ENCODE measurements at regions of chr1 and their contacts with region 1.

Region 1: GRCh38 chr1:211680752-211681327 is 5.4 kb upstream of the NEK2 start:
- DNase-seq: peak; percentile 92
- H3K4me3 Mint-ChIP-seq: no peak overlapping the region
- H3K27ac Mint-ChIP-seq: peak overlapping the region; percentile 24
- H3K4me1 Mint-ChIP-seq: peaks cover 8% of the 10 kb centered on the region
- H3K27me3 Mint-ChIP-seq: no peaks in the 10 kb centered on the region
- CTCF ChIP-seq: peak; percentile 99

Region 2: DNA sequence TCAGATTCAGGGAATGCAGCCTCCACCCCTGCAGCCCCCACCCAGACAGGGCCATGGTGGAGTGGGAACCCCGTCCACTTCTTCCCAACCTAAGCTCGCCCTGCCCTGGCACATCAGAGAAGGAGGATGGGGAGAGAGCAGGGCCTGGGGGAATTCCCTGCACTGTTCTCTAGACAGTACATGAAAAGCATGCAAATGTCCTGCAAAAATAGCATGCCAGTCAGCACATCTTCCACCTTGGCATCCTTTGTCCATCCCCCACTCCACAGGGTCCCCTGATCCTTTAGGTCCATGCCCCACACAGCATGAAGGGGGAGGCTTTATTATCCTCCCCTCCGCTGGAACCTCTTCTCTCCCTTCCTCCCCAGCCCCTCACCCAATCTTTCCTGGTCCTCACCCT is 153.8 kb before region 1 on chr1:
- CTCF ChIA-PET with region 1: no interaction called
- POLR2A ChIA-PET with region 1: no interaction called
- intact Hi-C with region 1: no loop called
- DNase-seq: no peak
- H3K4me3 Mint-ChIP-seq: no peak overlapping the region
- H3K27ac Mint-ChIP-seq: peak overlapping the region; percentile 4
- H3K4me1 Mint-ChIP-seq: peaks cover 39% of the 10 kb centered on the region
- H3K27me3 Mint-ChIP-seq: no peaks in the 10 kb centered on the region
- CTCF ChIP-seq: no peak

Region 3: GRCh38 chr1:211667065-211667617 is 13.7 kb before region 1 on chr1:
- CTCF ChIA-PET with region 1: interaction called, 44 read pairs
- POLR2A ChIA-PET with region 1: interaction called, 5 read pairs
- intact Hi-C with region 1: no loop called
- DNase-seq: no peak
- H3K4me3 Mint-ChIP-seq: no peak overlapping the region
- H3K27ac Mint-ChIP-seq: no peak overlapping the region
- H3K4me1 Mint-ChIP-seq: peaks cover 8% of the 10 kb centered on the region
- H3K27me3 Mint-ChIP-seq: no peaks in the 10 kb centered on the region
- CTCF ChIP-seq: no peak

Region 4: GRCh38 chr1:211724687-211725196 is 43.9 kb after region 1 on chr1:
- CTCF ChIA-PET with region 1: interaction called, 15 read pairs
- POLR2A ChIA-PET with region 1: no interaction called
- intact Hi-C with region 1: no loop called
- DNase-seq: no peak
- H3K4me3 Mint-ChIP-seq: no peak overlapping the region
- H3K27ac Mint-ChIP-seq: no peak overlapping the region
- H3K4me1 Mint-ChIP-seq: no peaks in the 10 kb centered on the region
- H3K27me3 Mint-ChIP-seq: no peaks in the 10 kb centered on the region
- CTCF ChIP-seq: no peak

Region 5: GRCh38 chr1:211951856-211952255 is 271.0 kb after region 1 on chr1:
- CTCF ChIA-PET with region 1: interaction called, 12 read pairs
- POLR2A ChIA-PET with region 1: interaction called, 4 read pairs
- intact Hi-C with region 1: no loop called
- DNase-seq: peak; percentile 98
- H3K4me3 Mint-ChIP-seq: no peak overlapping the region
- H3K27ac Mint-ChIP-seq: no peak overlapping the region
- H3K4me1 Mint-ChIP-seq: peaks cover 17% of the 10 kb centered on the region
- H3K27me3 Mint-ChIP-seq: no peaks in the 10 kb centered on the region
- CTCF ChIP-seq: no peak

Region 6: GRCh38 chr1:212012034-212012740 is 331.3 kb after region 1 on chr1:
- CTCF ChIA-PET with region 1: interaction called, 27 read pairs
- POLR2A ChIA-PET with region 1: interaction called, 4 read pairs
- intact Hi-C with region 1: loop called (anchors 1 kb)
- DNase-seq: peak; percentile 95
- H3K4me3 Mint-ChIP-seq: no peak overlapping the region
- H3K27ac Mint-ChIP-seq: no peak overlapping the region
- H3K4me1 Mint-ChIP-seq: no peaks in the 10 kb centered on the region
- H3K27me3 Mint-ChIP-seq: no peaks in the 10 kb centered on the region
- CTCF ChIP-seq: peak; percentile 100

Region 7: GRCh38 chr1:212368073-212368484 is 687.2 kb after region 1 on chr1:
- CTCF ChIA-PET with region 1: interaction called, 18 read pairs
- POLR2A ChIA-PET with region 1: no interaction called
- intact Hi-C with region 1: loop called (anchors 1 kb)
- DNase-seq: peak; percentile 93
- H3K4me3 Mint-ChIP-seq: no peak overlapping the region
- H3K27ac Mint-ChIP-seq: peak overlapping the region; percentile 5
- H3K4me1 Mint-ChIP-seq: peaks cover 15% of the 10 kb centered on the region
- H3K27me3 Mint-ChIP-seq: no peaks in the 10 kb centered on the region
- CTCF ChIP-seq: peak; percentile 99